ENCODE measurements at regions of chr2 and their contacts with region 1.

Region 1: GRCh38 chr2:42828487-42829425 is 36.4 kb upstream of the HAAO start:
- DNase-seq: peak; percentile 78
- H3K4me3 Mint-ChIP-seq: no peak overlapping the region
- H3K27ac Mint-ChIP-seq: no peak overlapping the region
- H3K4me1 Mint-ChIP-seq: peaks cover 16% of the 10 kb centered on the region
- H3K27me3 Mint-ChIP-seq: no peaks in the 10 kb centered on the region

Region 2: DNA sequence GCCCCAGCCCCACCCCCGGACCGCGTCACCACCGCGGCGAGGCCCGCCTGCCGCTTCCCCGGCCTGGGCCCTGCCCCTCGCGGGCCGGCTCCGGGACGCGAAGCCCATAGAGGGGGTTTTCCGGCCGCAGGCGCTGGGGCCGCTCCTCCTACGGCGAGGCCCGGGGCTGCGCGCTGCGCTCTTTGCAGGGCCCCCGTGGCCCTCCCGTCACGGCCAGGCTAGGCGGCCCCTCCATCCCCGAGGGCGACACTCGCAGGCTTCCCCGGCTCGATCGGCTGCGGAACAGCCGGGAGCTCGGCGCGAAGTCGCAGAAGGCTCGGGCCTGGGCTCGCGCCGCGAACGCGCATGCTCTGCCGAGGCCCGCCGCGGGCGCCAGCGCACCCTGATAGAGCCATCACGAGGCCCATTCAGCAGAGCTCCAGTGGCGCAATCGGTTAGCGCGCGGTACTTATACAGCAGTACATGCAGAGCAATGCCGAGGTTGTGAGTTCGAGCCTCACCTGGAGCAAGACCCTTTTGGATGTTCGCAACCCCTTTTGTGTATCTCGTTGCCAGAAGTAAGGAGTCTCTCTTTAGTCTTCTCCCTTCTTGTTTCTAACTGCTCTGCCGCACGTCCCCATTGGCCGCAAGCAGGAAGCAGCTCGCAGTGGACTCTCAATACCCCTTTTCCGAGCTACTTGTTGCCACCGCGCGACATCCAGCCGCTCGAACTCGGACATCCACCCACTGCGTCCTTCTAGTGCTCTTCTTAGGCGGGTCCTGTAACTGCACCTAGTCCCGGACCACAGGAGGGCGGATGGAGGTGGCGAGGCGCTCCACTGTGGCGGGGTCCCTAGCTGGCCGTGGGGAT is 18.4 kb before region 1 on chr2:
- CTCF ChIA-PET with region 1: interaction called, 32 read pairs
- intact Hi-C with region 1: no loop called
- DNase-seq: peak; percentile 96
- H3K4me3 Mint-ChIP-seq: peak overlapping the region; percentile 88
- H3K27ac Mint-ChIP-seq: peak overlapping the region; percentile 93
- H3K4me1 Mint-ChIP-seq: peaks cover 11% of the 10 kb centered on the region
- H3K27me3 Mint-ChIP-seq: no peaks in the 10 kb centered on the region

Region 3: GRCh38 chr2:42859006-42859552 is 30.3 kb after region 1 on chr2:
- CTCF ChIA-PET with region 1: interaction called, 12 read pairs
- intact Hi-C with region 1: loop called (anchors 1 kb)
- DNase-seq: peak; percentile 91
- H3K4me3 Mint-ChIP-seq: no peak overlapping the region
- H3K27ac Mint-ChIP-seq: no peak overlapping the region
- H3K4me1 Mint-ChIP-seq: peaks cover 12% of the 10 kb centered on the region
- H3K27me3 Mint-ChIP-seq: no peaks in the 10 kb centered on the region

Region 4: DNA sequence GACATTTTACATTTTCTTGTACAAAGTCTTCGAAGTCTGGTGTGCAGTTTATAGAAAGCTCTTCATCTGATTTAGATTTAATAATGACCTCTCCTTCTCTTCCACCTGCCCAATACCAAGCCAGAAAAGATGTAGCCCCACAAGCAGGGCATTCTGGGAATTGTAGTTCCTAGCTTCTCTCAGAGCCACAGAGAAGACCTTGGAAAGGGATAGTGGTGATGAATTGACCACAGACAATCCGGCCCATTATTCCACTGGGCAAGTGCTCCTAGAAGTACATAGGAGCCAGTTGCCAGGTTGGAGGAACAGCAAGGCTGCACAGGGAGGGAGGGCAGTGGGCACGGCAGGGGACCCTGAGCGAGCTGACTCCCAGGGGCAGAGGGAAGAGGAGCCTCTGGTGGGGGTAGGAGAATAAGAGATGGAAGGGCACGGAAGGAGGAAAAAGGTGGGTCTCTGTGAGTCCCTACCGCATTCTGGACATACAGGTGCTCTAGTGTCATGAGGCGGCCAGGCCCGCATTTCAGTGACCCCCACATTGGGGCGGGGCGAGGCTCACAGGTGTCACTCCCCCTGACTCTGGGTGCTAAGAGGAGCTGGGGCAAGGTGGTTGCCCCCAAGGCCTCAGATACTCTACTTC is 116.1 kb after region 1 on chr2:
- CTCF ChIA-PET with region 1: interaction called, 19 read pairs
- intact Hi-C with region 1: loop called (anchors 2 kb)
- DNase-seq: no peak
- H3K4me3 Mint-ChIP-seq: no peak overlapping the region
- H3K27ac Mint-ChIP-seq: no peak overlapping the region
- H3K4me1 Mint-ChIP-seq: peaks cover 2% of the 10 kb centered on the region
- H3K27me3 Mint-ChIP-seq: no peaks in the 10 kb centered on the region

Region 5: GRCh38 chr2:43484323-43484930 is 655.7 kb after region 1 on chr2:
- CTCF ChIA-PET with region 1: interaction called, 4 read pairs
- intact Hi-C with region 1: loop called (anchors 5 kb)
- DNase-seq: no peak
- H3K4me3 Mint-ChIP-seq: no peak overlapping the region
- H3K27ac Mint-ChIP-seq: no peak overlapping the region
- H3K4me1 Mint-ChIP-seq: no peaks in the 10 kb centered on the region
- H3K27me3 Mint-ChIP-seq: no peaks in the 10 kb centered on the region

Measured in activated naive CD4-positive, alpha-beta T cell treated with anti-CD3 and anti-CD28 coated beads for 36 hours (primary cell).